Mammary epithelial cell (primary cell): ENCODE measurements at regions of chr1 and their contacts with region 1.

Region 1: DNA sequence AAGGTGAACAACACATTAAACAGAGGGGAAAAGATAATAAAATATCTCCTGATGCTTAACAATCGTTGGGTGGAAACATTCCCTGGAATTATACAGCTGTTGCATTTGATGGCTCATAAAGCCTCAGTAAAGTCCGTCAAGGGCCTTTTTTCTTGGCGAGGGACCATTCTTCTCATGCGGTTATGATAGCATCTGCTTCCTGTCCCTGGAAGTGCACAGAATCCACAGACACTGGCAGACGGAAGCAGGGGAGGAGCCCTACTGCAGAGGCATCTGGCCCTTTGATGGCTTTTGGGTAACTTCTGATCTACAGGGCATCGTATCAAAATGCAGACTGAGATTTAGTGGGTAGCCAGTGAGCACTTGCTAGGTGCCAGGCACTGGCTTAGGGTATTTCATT is 286.9 kb downstream of the KIF26B start:
- DNase-seq: no peak
- H3K4me3 ChIP-seq: no peak overlapping the region
- H3K27ac ChIP-seq: no peak overlapping the region
- H3K4me1 ChIP-seq: no peaks in the 10 kb centered on the region
- H3K27me3 ChIP-seq: no peaks in the 10 kb centered on the region
- CTCF ChIP-seq: no peak

Region 2: DNA sequence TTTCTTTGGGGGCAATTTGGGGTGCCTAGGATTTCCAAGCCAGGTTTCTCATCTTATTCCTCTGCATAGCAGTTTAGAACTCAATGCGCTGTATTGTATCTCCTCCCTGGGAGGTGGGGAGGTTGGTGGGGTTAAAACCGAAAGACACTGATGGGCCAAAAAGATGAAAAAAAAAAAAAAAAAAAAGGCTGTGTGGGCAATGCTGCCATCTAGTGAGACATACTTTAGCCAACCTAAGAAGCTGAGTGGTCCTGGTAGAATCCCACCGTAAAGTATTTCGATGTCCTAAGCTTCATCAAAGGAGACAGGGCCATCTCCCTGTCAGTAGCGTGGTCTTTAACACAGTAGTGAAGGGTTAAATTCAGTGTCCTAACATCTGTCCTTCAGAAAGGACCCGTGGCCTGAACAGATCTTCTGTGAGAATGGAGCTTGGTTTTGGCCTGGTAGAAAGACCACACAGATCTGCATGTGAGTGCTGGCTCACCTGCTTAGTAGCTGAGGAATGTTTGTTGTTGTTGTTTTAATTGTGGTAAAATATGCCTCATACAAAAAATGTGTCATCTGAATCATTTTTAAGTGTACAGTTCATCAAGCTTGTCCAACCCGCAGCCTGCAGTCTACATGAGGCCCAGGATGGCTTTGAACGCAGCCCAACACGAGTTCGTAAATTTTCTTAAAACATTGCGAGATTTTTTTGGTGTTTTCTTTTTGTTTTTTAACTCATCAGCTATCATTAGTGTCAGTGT is 60.7 kb before region 1 on chr1:
- CTCF ChIA-PET with region 1: no interaction called
- dilution Hi-C with region 1: loop called (anchors 5 kb)
- in situ Hi-C with region 1: no loop called
- intact Hi-C with region 1: no loop called
- DNase-seq: no peak
- H3K4me3 ChIP-seq: no peak overlapping the region
- H3K27ac ChIP-seq: no peak overlapping the region
- H3K4me1 ChIP-seq: no peaks in the 10 kb centered on the region
- H3K27me3 ChIP-seq: no peaks in the 10 kb centered on the region
- CTCF ChIP-seq: no peak

Region 3: GRCh38 chr1:245480393-245481120 is 38.9 kb after region 1 on chr1:
- CTCF ChIA-PET with region 1: no interaction called
- dilution Hi-C with region 1: loop called (anchors 5 kb)
- in situ Hi-C with region 1: no loop called
- intact Hi-C with region 1: no loop called
- DNase-seq: no peak
- H3K4me3 ChIP-seq: no peak overlapping the region
- H3K27ac ChIP-seq: no peak overlapping the region
- H3K4me1 ChIP-seq: no peaks in the 10 kb centered on the region
- H3K27me3 ChIP-seq: no peaks in the 10 kb centered on the region
- CTCF ChIP-seq: no peak